ENCODE measurements at regions of chrX and their contacts with region 1.

Region 1: GRCh38 chrX:130144509-130144908 is 21.1 kb downstream of the AIFM1 start:
- DNase-seq: no peak
- H3K4me3 Mint-ChIP-seq: no peak overlapping the region
- H3K27ac Mint-ChIP-seq: no peak overlapping the region
- H3K4me1 Mint-ChIP-seq: peaks cover 5% of the 10 kb centered on the region
- H3K27me3 Mint-ChIP-seq: no peaks in the 10 kb centered on the region

Region 2: DNA sequence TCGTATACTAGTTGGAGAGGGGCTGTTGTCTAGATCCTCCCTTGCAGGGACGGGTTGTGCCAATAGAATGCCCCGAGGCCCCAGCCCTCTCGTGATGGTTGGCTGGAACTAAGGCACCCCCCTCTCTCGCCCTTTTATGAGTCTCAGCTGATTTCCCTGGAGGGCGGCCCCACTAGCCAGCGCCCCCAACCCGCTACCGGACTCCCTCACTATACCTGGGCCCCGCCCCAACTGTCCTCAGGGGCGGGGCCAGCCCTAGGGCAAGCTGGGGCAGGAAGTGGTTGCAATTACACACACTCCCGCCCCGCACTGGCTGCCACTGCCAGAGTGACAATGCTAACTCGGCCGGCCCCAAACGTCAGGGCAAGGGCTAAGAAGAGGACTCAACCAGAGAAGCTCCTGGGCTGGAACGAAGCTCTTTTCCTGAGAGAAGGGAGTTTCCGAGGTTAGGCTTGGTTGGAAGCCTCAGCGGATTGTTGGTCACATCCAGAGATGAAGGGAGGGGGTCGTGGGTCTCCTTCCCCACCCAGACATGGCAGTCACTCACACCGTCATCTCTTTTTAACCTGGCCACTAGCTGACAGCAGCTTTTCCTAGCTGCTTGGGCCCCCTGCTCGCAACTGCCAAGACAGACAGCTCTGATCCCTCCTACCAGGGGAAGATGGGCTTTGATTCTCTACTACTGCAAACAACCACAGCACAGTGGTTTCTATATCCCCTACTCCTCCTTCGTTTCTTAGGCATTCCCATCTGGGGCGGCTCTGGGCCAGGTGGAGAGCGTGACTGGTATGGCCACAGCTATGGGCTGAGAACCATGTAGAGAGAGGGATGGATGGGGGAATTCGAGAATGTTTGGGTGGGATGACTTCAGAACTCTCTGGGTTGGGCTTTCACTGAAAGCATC is 183.1 kb before region 1 on chrX:
- intact Hi-C with region 1: no loop called
- DNase-seq: peak; percentile 66
- H3K4me3 Mint-ChIP-seq: peak overlapping the region; percentile 69
- H3K27ac Mint-ChIP-seq: peak overlapping the region; percentile 83
- H3K4me1 Mint-ChIP-seq: peaks cover 11% of the 10 kb centered on the region
- H3K27me3 Mint-ChIP-seq: no peaks in the 10 kb centered on the region

Region 3: DNA sequence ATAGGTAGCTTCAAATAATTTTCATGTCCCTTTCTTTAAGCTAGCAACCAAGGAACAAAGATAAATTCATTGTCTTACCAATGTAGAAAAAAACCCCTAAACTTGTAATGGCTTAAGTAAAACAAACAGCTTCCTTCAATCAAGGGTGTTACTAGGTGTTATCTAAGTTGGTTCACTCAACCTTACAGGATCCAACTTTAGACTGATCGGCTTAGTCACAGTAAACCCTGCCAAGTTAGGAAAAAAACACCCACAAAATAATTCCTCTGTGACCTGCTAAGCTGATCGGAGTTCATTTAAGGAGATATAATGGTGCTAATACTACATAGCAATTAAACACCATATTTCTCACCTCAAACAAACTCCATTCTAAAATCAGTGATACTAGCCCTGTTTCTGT is 11.1 kb after region 1 on chrX:
- intact Hi-C with region 1: loop called (anchors 1 kb)
- DNase-seq: no peak
- H3K4me3 Mint-ChIP-seq: no peak overlapping the region
- H3K27ac Mint-ChIP-seq: no peak overlapping the region
- H3K4me1 Mint-ChIP-seq: peaks cover 11% of the 10 kb centered on the region
- H3K27me3 Mint-ChIP-seq: no peaks in the 10 kb centered on the region

Region 4: DNA sequence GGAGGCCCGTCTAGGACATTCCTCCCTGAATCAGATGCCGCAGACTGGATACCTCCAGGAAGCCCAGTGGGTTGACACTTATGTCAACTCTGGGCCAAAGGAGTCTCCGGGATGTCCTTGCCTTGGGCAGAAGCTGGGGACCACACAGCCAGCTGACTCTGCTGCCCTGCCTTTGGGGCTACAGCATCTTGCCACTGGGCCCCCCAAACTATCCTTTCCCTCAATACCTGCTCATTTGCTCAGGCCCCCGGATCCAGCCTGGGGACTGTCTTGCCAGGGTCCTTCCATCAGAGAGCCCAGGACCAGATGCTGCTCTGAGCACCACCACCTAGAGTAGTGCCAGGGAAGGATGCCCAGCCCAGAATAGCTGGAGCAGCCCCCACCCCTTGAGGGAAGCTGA is 46.3 kb after region 1 on chrX:
- intact Hi-C with region 1: loop called (anchors 5 kb)
- DNase-seq: no peak
- H3K4me3 Mint-ChIP-seq: no peak overlapping the region
- H3K27ac Mint-ChIP-seq: no peak overlapping the region
- H3K4me1 Mint-ChIP-seq: peaks cover 7% of the 10 kb centered on the region
- H3K27me3 Mint-ChIP-seq: peaks cover 2% of the 10 kb centered on the region